ENCODE measurements at regions of chr15 and their contacts with region 1.

Region 1: GRCh38 chr15:92808978-92809879 is 90.9 kb upstream of the CHD2 start:
- DNase-seq: peak; percentile 100
- ATAC-seq: peak; percentile 94

Region 2: DNA sequence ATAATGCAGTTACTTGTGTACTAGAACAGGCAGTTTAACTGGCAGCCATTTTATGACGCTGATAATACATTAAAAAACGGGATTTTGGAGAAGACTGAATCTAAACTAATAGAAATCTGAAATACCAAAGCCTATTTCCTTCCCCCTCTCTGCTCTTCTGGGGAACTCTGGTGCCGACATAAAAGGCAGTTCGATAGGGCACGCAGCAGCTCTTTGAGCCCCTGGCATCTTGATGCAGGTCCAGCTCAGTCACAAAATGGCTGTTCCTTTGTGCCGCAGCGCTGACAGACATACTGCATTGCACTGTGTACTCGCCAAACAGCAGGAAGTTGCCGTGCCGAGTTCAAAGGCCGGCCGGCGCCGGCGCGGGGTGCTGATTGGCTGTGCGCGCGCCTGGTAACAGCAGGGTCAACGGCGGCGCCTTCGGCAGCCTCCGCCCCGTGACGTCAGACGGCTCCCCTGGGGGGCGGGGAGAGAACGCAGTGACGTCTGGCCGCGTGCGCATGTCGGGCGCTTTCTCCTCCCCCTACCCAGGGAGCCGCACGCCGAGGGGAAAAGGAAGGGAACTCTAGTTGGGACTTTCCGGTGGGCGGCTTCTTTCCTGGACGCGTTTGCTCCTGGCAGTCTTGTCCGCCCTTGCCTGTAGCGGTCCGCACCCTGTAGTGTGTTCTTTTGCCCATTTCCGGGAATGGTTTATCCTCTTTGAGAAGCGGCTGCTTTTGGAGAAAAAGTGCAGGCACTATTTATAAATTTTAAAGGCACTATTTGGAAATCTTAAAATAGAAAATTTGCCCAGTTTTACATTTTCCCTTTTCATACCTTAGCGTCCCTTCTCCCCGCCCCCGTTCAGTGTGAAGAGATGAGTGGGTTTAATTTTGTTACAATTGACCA is 95.0 kb after region 1 on chr15:
- intact Hi-C with region 1: loop called (anchors 1 kb)
- DNase-seq: peak; percentile 99
- ATAC-seq: peak; percentile 96

Region 3: DNA sequence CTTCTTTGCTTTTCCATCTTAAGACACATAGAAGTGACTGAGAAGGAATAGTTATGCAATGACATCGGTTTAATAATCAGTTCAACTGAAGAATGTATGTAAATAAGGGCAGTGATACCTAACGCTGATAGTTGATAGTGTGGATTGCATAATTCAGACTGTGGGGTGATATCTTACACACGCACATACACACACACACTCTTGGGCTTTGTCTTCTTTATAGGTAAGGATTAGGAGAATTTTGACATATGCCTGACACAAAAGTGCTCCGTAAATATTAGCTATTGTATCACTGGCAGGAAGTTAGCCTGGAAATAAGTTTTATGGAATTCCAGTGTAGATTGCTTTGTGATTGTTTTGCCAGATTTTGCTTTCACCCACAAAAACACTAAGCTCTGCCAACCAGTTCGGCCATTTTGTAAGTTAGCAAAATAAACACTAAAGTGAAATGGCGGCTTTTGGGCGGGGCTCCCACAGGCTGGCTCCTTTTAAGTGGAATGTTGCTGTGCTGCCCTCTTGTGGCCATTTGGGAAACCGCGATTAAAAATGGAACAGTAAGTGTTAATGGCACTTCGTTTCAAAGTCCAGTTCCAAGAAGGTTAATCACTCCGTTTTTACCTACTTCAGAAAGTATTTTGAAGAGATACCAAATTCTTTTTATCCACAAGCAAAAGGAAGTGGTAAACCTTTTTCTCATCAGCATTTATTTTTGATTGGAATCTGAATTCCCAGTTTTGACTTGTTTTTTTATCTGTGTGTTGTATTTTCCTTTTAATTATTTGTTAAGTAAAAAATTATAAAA is 108.6 kb after region 1 on chr15:
- intact Hi-C with region 1: loop called (anchors 1 kb)
- DNase-seq: peak; percentile 96
- ATAC-seq: peak; percentile 58